Activated B cell treated with CpG ODN at 0.5 μM for 24 hours (primary cell): ENCODE measurements at regions of chr2 and their contacts with region 1.

Region 1: GRCh38 chr2:168246483-168247340 is 683 bp downstream of the STK39 start:
- DNase-seq: peak; percentile 64
- ATAC-seq: peak; percentile 47
- H3K4me3 Mint-ChIP-seq: peak overlapping the region; percentile 87
- H3K27ac Mint-ChIP-seq: peak overlapping the region; percentile 80
- H3K4me1 Mint-ChIP-seq: peaks cover 31% of the 10 kb centered on the region
- H3K27me3 Mint-ChIP-seq: no peaks in the 10 kb centered on the region
- CTCF ChIP-seq: no peak

Region 2: DNA sequence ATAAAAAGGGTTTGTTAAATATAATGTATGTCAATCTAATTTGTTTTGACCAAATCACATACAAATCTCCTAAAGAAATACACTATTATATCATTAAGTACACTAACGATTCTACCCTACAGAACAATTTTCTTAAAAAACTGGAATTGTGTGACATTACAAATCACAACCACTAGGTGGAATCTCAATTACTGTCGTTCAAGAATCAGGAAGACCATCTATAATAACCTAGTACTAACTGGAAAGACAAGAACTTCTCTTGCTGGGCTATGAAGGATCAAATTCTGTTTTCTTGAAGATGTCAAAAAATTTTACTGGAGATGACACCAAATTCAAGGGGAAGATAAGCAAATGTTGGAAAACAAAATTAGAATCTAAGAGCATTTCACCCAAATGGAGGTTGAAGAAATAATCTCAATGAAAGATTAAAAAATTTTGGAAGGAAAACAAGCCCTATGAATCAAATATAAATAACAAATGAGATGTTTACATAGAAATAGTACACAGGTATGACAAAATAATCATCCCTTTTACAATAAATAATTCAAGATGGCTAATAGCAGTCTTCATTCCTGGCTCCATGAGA is 110.2 kb before region 1 on chr2:
- CTCF ChIA-PET with region 1: interaction called, 5 read pairs
- POLR2A ChIA-PET with region 1: interaction called, 3 read pairs
- intact Hi-C with region 1: loop called (anchors 1 kb)
- DNase-seq: no peak
- ATAC-seq: peak; percentile 57
- H3K4me3 Mint-ChIP-seq: no peak overlapping the region
- H3K27ac Mint-ChIP-seq: no peak overlapping the region
- H3K4me1 Mint-ChIP-seq: peaks cover 24% of the 10 kb centered on the region
- H3K27me3 Mint-ChIP-seq: no peaks in the 10 kb centered on the region
- CTCF ChIP-seq: peak; percentile 26

Region 3: DNA sequence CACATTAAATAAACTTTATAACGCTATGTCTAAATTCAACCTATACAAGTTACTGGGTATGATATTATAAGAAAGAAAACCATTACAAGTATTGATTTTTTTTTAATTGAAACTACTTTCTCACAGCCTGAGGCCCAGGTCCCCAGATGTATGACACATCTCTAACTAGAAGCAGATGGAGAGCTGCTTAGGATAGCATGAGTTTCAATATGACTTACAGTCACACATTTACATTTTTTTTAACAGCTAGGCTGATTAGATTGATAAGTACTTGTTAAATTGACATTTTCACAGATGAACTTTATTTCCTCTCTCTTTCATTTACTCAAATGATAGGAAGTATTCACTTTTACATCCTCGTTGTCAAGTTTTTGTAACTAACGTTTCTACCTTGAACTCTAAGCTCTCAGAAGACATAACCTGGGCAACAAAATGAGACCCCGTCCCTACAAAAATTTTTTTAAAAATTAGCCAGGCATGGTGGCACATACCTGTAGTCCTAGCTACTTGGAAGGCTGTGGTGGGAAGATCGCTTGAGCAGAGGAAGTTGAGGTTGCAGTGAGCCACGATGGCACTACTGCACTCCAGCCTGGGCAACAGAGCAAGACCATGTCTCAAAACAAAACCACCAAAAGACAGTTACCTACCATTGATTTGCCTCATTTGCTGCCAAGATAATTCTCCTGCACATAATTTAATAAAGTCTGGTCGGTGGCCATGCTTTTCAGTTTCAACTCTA is 51.8 kb before region 1 on chr2:
- CTCF ChIA-PET with region 1: interaction called, 4 read pairs
- POLR2A ChIA-PET with region 1: interaction called, 16 read pairs
- intact Hi-C with region 1: loop called (anchors 1 kb)
- DNase-seq: peak; percentile 33
- ATAC-seq: peak; percentile 84
- H3K4me3 Mint-ChIP-seq: peak overlapping the region; percentile 79
- H3K27ac Mint-ChIP-seq: peak overlapping the region; percentile 97
- H3K4me1 Mint-ChIP-seq: peaks cover 53% of the 10 kb centered on the region
- H3K27me3 Mint-ChIP-seq: no peaks in the 10 kb centered on the region
- CTCF ChIP-seq: no peak

Region 4: DNA sequence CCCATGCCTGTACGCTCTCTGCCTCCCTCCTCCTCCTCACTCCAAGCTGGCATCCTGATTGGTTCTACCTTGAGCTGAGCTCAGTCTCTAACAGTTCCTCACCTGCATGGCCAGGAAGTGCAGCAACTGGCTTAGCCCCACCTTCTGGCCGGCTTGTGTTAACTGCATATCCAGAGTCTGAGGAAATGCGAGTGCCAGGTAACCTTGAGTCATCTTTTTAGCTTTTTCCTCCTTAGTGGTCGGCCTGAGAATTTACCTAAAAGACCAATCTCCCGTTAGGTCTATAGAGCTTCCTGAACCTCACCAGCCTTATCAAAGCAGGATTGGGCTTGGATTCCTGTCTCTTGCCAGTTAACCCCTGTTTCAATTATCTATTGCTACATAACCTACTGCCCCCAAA is 90.2 kb after region 1 on chr2:
- CTCF ChIA-PET with region 1: no interaction called
- POLR2A ChIA-PET with region 1: no interaction called
- intact Hi-C with region 1: loop called (anchors 2 kb)
- DNase-seq: no peak
- ATAC-seq: peak; percentile 71
- H3K4me3 Mint-ChIP-seq: no peak overlapping the region
- H3K27ac Mint-ChIP-seq: peak overlapping the region; percentile 59
- H3K4me1 Mint-ChIP-seq: peaks cover 2% of the 10 kb centered on the region
- H3K27me3 Mint-ChIP-seq: peaks cover 4% of the 10 kb centered on the region
- CTCF ChIP-seq: no peak

Region 5: DNA sequence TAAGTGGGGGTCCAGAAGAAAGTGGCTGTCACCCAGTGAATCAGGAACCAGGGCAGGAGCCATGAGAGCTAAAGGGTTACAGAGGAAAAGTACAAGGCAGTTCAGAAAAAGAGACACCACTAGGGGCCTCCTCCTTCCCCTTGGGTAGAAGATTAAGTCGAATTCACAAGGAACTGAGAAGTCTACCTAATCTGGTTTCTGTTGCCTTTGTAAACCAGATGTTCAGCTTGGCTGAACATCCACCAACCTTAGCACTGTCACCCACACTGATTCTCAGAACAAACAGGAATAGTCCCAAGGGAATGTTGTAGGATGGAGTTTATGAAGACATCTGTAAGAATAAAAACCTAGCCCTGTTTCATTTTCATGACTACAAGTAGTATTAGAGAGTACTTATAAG is 465.3 kb after region 1 on chr2:
- CTCF ChIA-PET with region 1: no interaction called
- POLR2A ChIA-PET with region 1: no interaction called
- intact Hi-C with region 1: loop called (anchors 5 kb)
- DNase-seq: no peak
- ATAC-seq: peak; percentile 97
- H3K4me3 Mint-ChIP-seq: peak overlapping the region; percentile 32
- H3K27ac Mint-ChIP-seq: peak overlapping the region; percentile 72
- H3K4me1 Mint-ChIP-seq: peaks cover 20% of the 10 kb centered on the region
- H3K27me3 Mint-ChIP-seq: no peaks in the 10 kb centered on the region
- CTCF ChIP-seq: no peak